ENCODE measurements at regions of chr5 and their contacts with region 1.

Region 1: GRCh38 chr5:8766448-8766847 is 779.4 kb downstream of the SEMA5A start:
- DNase-seq: no peak
- H3K4me3 ChIP-seq: no peak overlapping the region
- CTCF ChIP-seq: no peak

Region 2: DNA sequence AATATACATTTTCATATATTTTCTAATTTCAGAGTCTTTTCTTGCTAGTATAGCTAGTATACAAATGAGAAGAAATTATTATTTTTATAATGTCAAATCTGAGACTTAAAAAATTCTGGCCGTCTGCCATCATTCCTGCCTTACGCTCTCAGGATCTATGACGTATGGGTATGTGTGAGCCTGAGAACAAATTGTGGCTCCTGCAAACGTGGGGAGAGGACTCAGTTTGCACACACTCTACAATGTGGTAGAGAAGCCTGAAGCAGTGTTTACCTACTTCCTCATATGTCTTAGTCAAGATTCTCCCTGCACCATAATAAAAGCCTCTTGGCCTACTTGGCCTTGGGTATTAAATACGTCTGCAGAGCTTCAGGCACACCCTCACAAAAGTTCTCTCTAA is 45.9 kb before region 1 on chr5:
- in situ Hi-C with region 1: loop called (anchors 5 kb)
- DNase-seq: no peak
- H3K4me3 ChIP-seq: no peak overlapping the region
- CTCF ChIP-seq: no peak